Activated CD4-positive, alpha-beta memory T cell treated with anti-CD3 and anti-CD28 coated beads, Interleukin-2, amount 10 ng/mL, durations not matched to agents 7 days and 5 days (primary cell): ENCODE measurements at regions of chr2 and their contacts with region 1.

Region 1: GRCh38 chr2:85420536-85421259 is 2.2 kb downstream of the SH2D6 start:
- DNase-seq: peak; percentile 92
- H3K4me3 Mint-ChIP-seq: peak overlapping the region; percentile 66
- H3K27ac Mint-ChIP-seq: peak overlapping the region; percentile 77
- H3K4me1 Mint-ChIP-seq: peaks cover 33% of the 10 kb centered on the region
- H3K27me3 Mint-ChIP-seq: no peaks in the 10 kb centered on the region

Region 2: DNA sequence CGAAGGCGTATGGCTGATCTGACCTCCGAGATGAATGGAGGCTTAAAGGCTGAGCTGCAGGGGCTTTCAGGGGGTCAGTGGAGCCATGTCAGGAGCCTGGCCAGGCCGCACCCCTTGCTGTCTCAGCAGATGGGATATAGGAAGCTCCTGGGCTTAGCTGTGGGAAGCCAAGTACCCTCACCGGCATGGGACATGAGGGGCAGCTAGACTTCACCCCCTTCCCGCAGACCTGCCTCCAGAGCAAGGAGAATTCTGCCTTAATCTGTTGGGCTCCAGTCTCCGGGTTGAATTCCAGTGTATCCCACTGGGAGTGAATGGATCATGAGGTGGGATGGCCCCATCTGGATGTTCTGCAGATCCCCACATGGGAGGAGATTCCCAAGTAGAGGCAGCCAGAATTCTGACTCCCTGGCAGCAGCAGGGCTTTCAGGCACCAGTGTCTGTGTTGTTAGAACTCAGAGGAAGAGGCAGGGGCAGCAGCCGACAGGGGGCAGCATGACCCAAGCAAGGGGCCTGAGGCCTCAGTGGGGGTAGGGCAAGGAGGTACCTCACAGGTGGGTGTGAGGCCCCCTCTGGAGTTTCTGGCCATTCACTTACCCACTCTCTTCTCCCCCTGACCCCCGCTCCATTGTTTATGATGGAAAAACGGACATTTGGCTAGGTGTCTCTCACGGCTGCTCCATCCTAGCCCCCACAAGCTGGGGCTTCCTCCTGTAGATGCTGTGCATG is 29.6 kb before region 1 on chr2:
- CTCF ChIA-PET with region 1: interaction called, 12 read pairs
- POLR2A ChIA-PET with region 1: interaction called, 3 read pairs
- DNase-seq: peak; percentile 77
- H3K4me3 Mint-ChIP-seq: no peak overlapping the region
- H3K27ac Mint-ChIP-seq: no peak overlapping the region
- H3K4me1 Mint-ChIP-seq: peaks cover 10% of the 10 kb centered on the region
- H3K27me3 Mint-ChIP-seq: no peaks in the 10 kb centered on the region

Region 3: GRCh38 chr2:85437488-85438284 is 17.0 kb after region 1 on chr2:
- CTCF ChIA-PET with region 1: interaction called, 18 read pairs
- POLR2A ChIA-PET with region 1: interaction called, 28 read pairs
- DNase-seq: peak; percentile 81
- H3K4me3 Mint-ChIP-seq: peak overlapping the region; percentile 77
- H3K27ac Mint-ChIP-seq: peak overlapping the region; percentile 89
- H3K4me1 Mint-ChIP-seq: peaks cover 40% of the 10 kb centered on the region
- H3K27me3 Mint-ChIP-seq: no peaks in the 10 kb centered on the region

Region 4: DNA sequence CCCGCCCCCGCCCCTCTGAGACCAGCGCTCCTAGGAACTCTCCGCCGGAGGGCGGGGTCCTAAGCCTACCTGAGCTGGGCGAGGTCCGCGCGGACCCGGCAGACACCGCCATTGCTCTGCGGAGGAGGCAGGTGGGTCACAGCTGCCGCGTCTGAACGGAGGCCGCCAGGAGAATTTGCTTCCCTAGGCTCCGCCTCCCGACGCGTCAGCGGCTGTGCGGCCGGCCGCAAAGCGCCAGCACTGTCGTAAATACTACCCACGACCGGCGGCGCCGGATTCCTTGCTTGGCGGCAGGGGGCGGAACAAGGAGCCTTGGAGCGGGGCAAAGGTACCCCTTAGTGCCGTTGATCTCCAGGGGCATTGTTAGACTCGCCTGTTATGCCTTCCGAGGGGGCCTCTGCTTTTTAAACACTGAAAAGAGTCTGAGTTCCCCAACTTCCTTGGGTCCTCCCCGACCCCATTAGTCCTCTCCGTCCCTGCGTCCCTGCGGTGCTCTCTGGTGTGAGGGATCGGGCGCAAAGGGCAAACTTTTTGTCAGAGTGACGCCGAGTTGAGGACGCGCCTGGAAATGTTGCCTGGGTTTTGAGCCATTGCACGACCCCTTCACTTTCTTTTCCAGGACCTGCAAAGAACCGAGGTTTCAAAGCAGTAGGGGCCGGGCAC is 140.8 kb after region 1 on chr2 and contains the start of gene GGCX:
- CTCF ChIA-PET with region 1: interaction called, 10 read pairs
- POLR2A ChIA-PET with region 1: interaction called, 11 read pairs
- DNase-seq: peak; percentile 96
- H3K4me3 Mint-ChIP-seq: peak within 1 kb of the TSS; percentile 87
- H3K27ac Mint-ChIP-seq: peak within 1 kb of the TSS; percentile 90
- H3K4me1 Mint-ChIP-seq: peaks cover 36% of the 10 kb centered on the region
- H3K27me3 Mint-ChIP-seq: no peaks in the 10 kb centered on the region
- total RNA-seq, gene GGCX: 22.5 to 22.8 TPM

Region 5: GRCh38 chr2:85635636-85636035 is 214.9 kb after region 1 on chr2:
- CTCF ChIA-PET with region 1: interaction called, 22 read pairs
- POLR2A ChIA-PET with region 1: interaction called, 4 read pairs
- DNase-seq: no peak
- H3K4me3 Mint-ChIP-seq: no peak overlapping the region
- H3K27ac Mint-ChIP-seq: peak overlapping the region; percentile 9
- H3K4me1 Mint-ChIP-seq: peaks cover 10% of the 10 kb centered on the region
- H3K27me3 Mint-ChIP-seq: no peaks in the 10 kb centered on the region